ENCODE measurements at regions of chr6 and their contacts with region 1.

Region 1: DNA sequence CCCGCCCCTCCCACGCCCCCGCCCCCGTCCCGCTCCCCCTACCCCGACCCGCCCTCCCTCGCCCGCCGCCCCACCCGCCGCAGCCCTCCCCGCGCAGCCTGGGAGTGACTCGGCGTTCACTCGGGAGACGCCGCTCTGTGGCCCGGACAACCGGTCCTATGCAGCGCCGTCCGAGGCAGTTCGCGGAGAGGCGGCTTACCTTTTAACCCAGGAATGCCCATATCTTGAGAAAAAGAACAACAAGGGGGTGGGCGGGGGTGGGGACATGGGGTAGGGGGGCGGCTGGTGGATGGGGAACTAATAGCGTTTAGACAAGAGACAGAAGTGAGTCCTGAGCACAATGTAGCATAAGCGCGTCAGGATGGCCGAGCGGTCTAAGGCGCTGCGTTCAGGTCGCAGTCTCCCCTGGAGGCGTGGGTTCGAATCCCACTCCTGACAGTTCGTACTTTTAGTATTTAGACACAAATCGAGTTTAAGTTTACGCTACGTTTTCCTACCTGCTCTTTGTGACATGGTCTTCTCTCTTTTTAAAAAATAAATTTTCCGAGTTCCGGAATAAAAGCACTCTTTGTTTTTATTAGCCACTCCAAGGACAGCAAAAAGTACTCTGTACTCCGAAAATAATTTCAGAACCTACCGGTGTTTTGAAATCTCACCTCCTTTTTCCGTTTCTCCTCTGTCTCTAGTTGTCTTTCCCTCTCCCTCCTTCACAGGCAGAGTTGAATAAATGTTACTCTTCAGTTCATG is 17.1 kb upstream of the HMGN4 start:
- DNase-seq: peak; percentile 74 to 90 (median 87)
- ATAC-seq: peak; percentile 84
- H3K4me3 ChIP-seq: peak overlapping the region; percentile 61
- H3K4me3 Mint-ChIP-seq: peak overlapping the region; percentile 73 to 100 (median 91)
- H3K27ac ChIP-seq: peak overlapping the region; percentile 69
- H3K27ac Mint-ChIP-seq: peak overlapping the region; percentile 91 to 98 (median 97)
- H3K4me1 ChIP-seq: peaks cover 8 to 15% of the 10 kb centered on the region in 2 donors
- H3K4me1 Mint-ChIP-seq: peaks cover 6 to 42% (median 35%) of the 10 kb centered on the region in 7 donors
- H3K27me3 ChIP-seq: no peaks in the 10 kb centered on the region
- H3K27me3 Mint-ChIP-seq: peaks cover 0 to 6% (median 0%) of the 10 kb centered on the region in 5 donors

Region 2: GRCh38 chr6:26065952-26066380 is 455.1 kb before region 1 on chr6:
- CTCF ChIA-PET with region 1: no interaction called
- POLR2A ChIA-PET with region 1: no interaction called
- intact Hi-C with region 1: no loop called
- DNase-seq: peak in 7 of 9 donors; percentile 51 to 74 (median 61)
- ATAC-seq: peak; percentile 97
- H3K4me3 ChIP-seq: no peak overlapping the region
- H3K4me3 Mint-ChIP-seq: no peak overlapping the region
- H3K27ac ChIP-seq: no peak overlapping the region
- H3K27ac Mint-ChIP-seq: no peak overlapping the region
- H3K4me1 ChIP-seq: no peaks in the 10 kb centered on the region
- H3K4me1 Mint-ChIP-seq: peaks cover 1 to 22% (median 11%) of the 10 kb centered on the region in 7 donors
- H3K27me3 ChIP-seq: no peaks in the 10 kb centered on the region
- H3K27me3 Mint-ChIP-seq: peaks cover 0 to 39% (median 0%) of the 10 kb centered on the region in 5 donors

Region 3: GRCh38 chr6:26390531-26390930 is 130.5 kb before region 1 on chr6:
- CTCF ChIA-PET with region 1: no interaction called
- POLR2A ChIA-PET with region 1: no interaction called
- intact Hi-C with region 1: no loop called
- DNase-seq: no peak
- ATAC-seq: no peak
- H3K4me3 ChIP-seq: no peak overlapping the region
- H3K4me3 Mint-ChIP-seq: no peak overlapping the region
- H3K27ac ChIP-seq: no peak overlapping the region
- H3K27ac Mint-ChIP-seq: no peak overlapping the region
- H3K4me1 ChIP-seq: no peaks in the 10 kb centered on the region
- H3K4me1 Mint-ChIP-seq: peaks cover 0 to 27% (median 6%) of the 10 kb centered on the region in 7 donors
- H3K27me3 ChIP-seq: no peaks in the 10 kb centered on the region
- H3K27me3 Mint-ChIP-seq: no peaks in the 10 kb centered on the region

Region 4: GRCh38 chr6:26401987-26402658 is 118.9 kb before region 1 on chr6 and contains the start of gene BTN3A1:
- CTCF ChIA-PET with region 1: no interaction called
- POLR2A ChIA-PET with region 1: no interaction called
- intact Hi-C with region 1: loop called (anchors 1 to 10 kb)
- DNase-seq: peak in 8 of 9 donors; percentile 65 to 85 (median 78)
- ATAC-seq: peak; percentile 93
- H3K4me3 ChIP-seq: peak within 1 kb of the TSS; percentile 95
- H3K4me3 Mint-ChIP-seq: peak within 1 kb of the TSS; percentile 94 to 100 (median 100)
- H3K27ac ChIP-seq: peak within 1 kb of the TSS; percentile 96
- H3K27ac Mint-ChIP-seq: peak within 1 kb of the TSS; percentile 97 to 100 (median 99)
- H3K4me1 ChIP-seq: peaks cover 35 to 37% of the 10 kb centered on the region in 2 donors
- H3K4me1 Mint-ChIP-seq: peaks cover 37 to 58% (median 53%) of the 10 kb centered on the region in 7 donors
- H3K27me3 ChIP-seq: no peaks in the 10 kb centered on the region
- H3K27me3 Mint-ChIP-seq: no peaks in the 10 kb centered on the region
- total RNA-seq, gene BTN3A1: 122 to 242 (median 235) TPM

Region 5: DNA sequence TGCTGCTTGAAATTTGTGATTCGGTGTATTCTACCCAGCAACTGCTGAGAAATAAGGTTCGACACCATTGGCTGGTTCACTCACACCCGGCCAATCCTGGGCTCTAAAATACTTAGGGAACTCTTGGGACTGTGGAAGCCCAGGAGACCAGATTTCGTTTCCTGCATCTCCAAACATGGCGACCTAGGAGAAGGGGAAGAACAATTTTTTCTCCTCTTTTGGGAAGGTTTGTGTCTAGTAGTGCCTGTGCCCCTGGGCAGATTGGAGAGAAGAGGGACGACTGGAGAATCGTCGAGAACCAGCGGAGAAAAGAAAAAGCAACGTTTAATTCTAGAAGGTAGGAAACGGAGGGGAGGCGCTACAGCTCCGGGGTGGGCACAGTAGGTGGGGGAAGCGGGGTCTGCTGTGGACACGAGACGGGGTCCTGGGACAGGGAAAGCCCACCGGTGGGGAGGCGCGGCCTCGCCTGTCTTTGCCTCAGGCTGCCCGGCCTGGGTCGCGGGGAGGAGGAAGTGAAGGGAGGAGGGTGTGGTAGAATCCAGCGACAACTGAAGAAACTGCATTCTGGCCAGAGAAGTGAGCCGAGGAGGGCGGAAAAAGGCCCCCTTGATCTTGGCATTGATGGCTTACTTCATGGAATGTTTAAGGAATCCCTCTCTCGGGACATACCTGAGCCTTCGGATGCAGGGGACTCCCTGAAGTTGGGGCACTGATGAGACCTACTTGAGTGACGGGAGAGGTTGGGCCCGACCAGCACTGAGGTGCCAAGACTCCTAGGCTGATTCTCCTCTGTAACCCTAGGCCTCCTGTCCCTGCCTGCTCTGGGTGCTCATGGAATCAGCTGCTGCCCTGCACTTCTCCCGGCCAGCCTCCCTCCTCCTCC is 63.0 kb before region 1 on chr6 and contains the start of gene BTN2A1:
- CTCF ChIA-PET with region 1: no interaction called
- POLR2A ChIA-PET with region 1: interaction called, 4 read pairs
- intact Hi-C with region 1: loop called (anchors 2 to 5 kb)
- DNase-seq: peak in 8 of 9 donors; percentile 59 to 86 (median 78)
- ATAC-seq: peak; percentile 99
- H3K4me3 ChIP-seq: peak within 1 kb of the TSS; percentile 93
- H3K4me3 Mint-ChIP-seq: peak within 1 kb of the TSS; percentile 90 to 100 (median 98)
- H3K27ac ChIP-seq: peak within 1 kb of the TSS; percentile 81
- H3K27ac Mint-ChIP-seq: peak within 1 kb of the TSS; percentile 89 to 99 (median 94)
- H3K4me1 ChIP-seq: peaks cover 27 to 38% of the 10 kb centered on the region in 2 donors
- H3K4me1 Mint-ChIP-seq: peaks cover 43 to 75% (median 60%) of the 10 kb centered on the region in 7 donors
- H3K27me3 ChIP-seq: no peaks in the 10 kb centered on the region
- H3K27me3 Mint-ChIP-seq: no peaks in the 10 kb centered on the region
- total RNA-seq, gene BTN2A1: 29.0 to 54.6 (median 37.2) TPM

Region 6: GRCh38 chr6:26532699-26533531 is 11.9 kb after region 1 on chr6:
- CTCF ChIA-PET with region 1: interaction called, 4 read pairs
- POLR2A ChIA-PET with region 1: interaction called, 51 read pairs
- intact Hi-C with region 1: loop called (anchors 1 kb)
- DNase-seq: peak; percentile 67 to 94 (median 93)
- ATAC-seq: peak; percentile 57
- H3K4me3 ChIP-seq: peak overlapping the region; percentile 93
- H3K4me3 Mint-ChIP-seq: peak overlapping the region; percentile 83 to 99 (median 96)
- H3K27ac ChIP-seq: peak overlapping the region; percentile 72
- H3K27ac Mint-ChIP-seq: peak overlapping the region; percentile 88 to 98 (median 97)
- H3K4me1 ChIP-seq: peaks cover 14 to 23% of the 10 kb centered on the region in 2 donors
- H3K4me1 Mint-ChIP-seq: peaks cover 17 to 70% (median 45%) of the 10 kb centered on the region in 7 donors
- H3K27me3 ChIP-seq: no peaks in the 10 kb centered on the region
- H3K27me3 Mint-ChIP-seq: peaks cover 0 to 7% (median 0%) of the 10 kb centered on the region in 5 donors

Region 7: DNA sequence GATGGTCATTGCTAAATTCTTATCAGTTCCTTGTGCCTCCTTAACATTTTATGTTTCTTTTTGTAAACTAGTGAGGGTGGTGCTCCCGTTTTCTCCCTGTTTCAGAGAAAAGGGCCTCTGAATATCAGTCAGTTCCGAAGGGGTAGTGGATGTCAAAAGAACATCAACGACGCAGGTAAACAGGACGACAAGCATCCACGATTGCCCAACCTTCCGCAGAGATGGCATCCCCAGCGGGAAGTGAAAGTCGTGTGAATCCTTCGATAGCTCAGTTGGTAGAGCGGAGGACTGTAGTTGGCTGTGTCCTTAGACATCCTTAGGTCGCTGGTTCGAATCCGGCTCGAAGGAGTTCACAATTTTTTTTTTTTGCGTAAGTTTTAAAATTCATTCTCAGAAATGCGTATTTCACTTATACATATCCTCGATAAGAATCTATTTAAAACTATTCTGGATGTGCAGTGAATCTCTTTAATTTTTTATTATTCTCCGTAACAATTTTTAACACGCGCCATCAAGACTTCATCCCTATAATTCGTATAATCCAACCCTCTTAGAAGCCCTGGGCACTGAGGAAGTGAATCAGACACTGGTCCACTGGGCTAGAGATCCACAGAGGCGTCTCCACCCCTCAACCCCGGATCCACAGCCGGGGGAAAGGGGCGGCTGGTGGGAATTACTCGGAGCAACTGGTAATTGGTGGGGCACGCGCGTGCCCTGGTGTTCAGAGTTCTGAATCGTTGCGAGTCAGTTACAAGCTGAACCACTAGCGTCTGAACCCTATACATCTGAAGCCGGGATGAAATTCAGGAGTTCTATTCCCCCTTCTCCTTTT is 47.8 kb after region 1 on chr6:
- CTCF ChIA-PET with region 1: interaction called, 7 read pairs
- POLR2A ChIA-PET with region 1: interaction called, 4 read pairs
- intact Hi-C with region 1: loop called (anchors 1 kb)
- DNase-seq: peak; percentile 96 to 99 (median 98)
- ATAC-seq: peak; percentile 84
- H3K4me3 ChIP-seq: peak overlapping the region; percentile 90
- H3K4me3 Mint-ChIP-seq: peak overlapping the region; percentile 90 to 100 (median 95)
- H3K27ac ChIP-seq: peak overlapping the region; percentile 74
- H3K27ac Mint-ChIP-seq: peak overlapping the region; percentile 96 to 100 (median 99)
- H3K4me1 ChIP-seq: peaks cover 0 to 3% of the 10 kb centered on the region in 2 donors
- H3K4me1 Mint-ChIP-seq: peaks cover 11 to 42% (median 26%) of the 10 kb centered on the region in 7 donors
- H3K27me3 ChIP-seq: no peaks in the 10 kb centered on the region
- H3K27me3 Mint-ChIP-seq: peaks cover 0 to 12% (median 0%) of the 10 kb centered on the region in 5 donors

Region 8: GRCh38 chr6:27374824-27375612 is 854.0 kb after region 1 on chr6:
- CTCF ChIA-PET with region 1: no interaction called
- POLR2A ChIA-PET with region 1: no interaction called
- intact Hi-C with region 1: loop called in 1 of 2 experiments (anchors 5 kb)
- DNase-seq: peak; percentile 31 to 68 (median 62)
- ATAC-seq: peak; percentile 98
- H3K4me3 ChIP-seq: peak overlapping the region; percentile 81
- H3K4me3 Mint-ChIP-seq: peak overlapping the region; percentile 68 to 94 (median 92)
- H3K27ac ChIP-seq: peak overlapping the region; percentile 68
- H3K27ac Mint-ChIP-seq: peak overlapping the region in 8 of 9 donors; percentile 81 to 93 (median 87)
- H3K4me1 ChIP-seq: peaks cover 13 to 17% of the 10 kb centered on the region in 2 donors
- H3K4me1 Mint-ChIP-seq: peaks cover 16 to 35% (median 28%) of the 10 kb centered on the region in 7 donors
- H3K27me3 ChIP-seq: no peaks in the 10 kb centered on the region
- H3K27me3 Mint-ChIP-seq: peaks cover 0 to 6% (median under 1%) of the 10 kb centered on the region in 5 donors